Calu3 (cell line): ENCODE measurements at regions of chr1 and their contacts with region 1.

Region 1: DNA sequence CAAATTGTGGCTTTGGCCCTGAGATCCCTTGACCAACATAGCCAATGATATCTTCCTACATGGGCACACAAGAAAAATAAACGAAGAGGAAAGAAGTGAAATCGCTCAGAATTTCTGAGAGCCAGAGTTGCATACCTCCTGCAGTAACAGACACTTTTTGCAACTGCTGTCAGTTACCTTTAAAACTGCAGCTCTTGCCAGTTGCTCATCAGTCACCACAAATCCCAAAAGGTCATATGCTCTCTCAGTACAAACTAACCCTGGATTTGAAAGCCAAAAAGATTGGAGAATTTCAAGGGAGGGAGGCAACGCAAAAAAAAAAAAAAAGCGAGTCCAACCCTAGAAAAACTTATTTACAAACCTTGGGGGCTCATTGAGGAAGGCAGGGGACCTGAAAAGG is 47.2 kb upstream of the DNAH14 start:
- DNase-seq: no peak
- H3K4me3 Mint-ChIP-seq: no peak overlapping the region
- H3K27ac Mint-ChIP-seq: no peak overlapping the region
- H3K4me1 Mint-ChIP-seq: no peaks in the 10 kb centered on the region
- H3K27me3 Mint-ChIP-seq: peaks cover 56% of the 10 kb centered on the region
- CTCF ChIP-seq: no peak

Region 2: GRCh38 chr1:225182716-225183115 is 300.5 kb after region 1 on chr1:
- CTCF ChIA-PET with region 1: no interaction called
- intact Hi-C with region 1: no loop called
- DNase-seq: no peak
- H3K4me3 Mint-ChIP-seq: no peak overlapping the region
- H3K27ac Mint-ChIP-seq: no peak overlapping the region
- H3K4me1 Mint-ChIP-seq: no peaks in the 10 kb centered on the region
- H3K27me3 Mint-ChIP-seq: no peaks in the 10 kb centered on the region
- CTCF ChIP-seq: no peak

Region 3: GRCh38 chr1:226019572-226019971 is 1137.3 kb after region 1 on chr1:
- CTCF ChIA-PET with region 1: interaction called, 10 read pairs
- intact Hi-C with region 1: no loop called
- DNase-seq: no peak
- H3K4me3 Mint-ChIP-seq: no peak overlapping the region
- H3K27ac Mint-ChIP-seq: no peak overlapping the region
- H3K4me1 Mint-ChIP-seq: no peaks in the 10 kb centered on the region
- H3K27me3 Mint-ChIP-seq: peaks cover 5% of the 10 kb centered on the region
- CTCF ChIP-seq: no peak